CD14-positive monocyte (primary cell): ENCODE measurements at regions of chr20 and their contacts with region 1.

Region 1: DNA sequence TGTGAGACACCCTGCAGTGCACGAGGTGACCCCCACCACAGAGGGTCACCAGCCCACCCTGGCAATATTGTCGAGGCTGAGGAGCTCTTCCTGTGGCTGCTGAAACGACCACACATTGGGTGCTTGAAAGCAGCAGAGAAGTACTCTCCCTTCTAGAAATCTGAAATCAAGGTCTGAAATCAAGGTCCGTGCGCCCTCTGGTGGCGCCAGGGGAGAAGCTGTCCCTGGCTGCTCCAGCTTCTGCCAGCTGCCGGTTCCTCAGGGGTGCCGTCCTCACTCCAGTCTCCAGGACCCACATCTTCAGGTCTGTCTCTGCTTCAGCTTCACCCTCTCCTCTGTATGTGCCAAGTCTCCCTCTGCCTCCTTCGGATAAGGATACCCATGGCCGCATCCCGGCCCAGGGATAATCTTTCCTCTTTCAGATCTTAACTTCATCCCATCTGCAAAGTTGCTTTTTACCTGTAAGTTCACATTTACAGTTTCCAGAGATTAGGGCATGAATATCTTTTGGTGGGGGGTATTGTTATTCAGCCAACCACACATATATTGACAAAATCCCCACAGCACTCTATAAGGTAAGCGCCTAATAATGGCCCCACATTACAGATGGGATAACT is 108.3 kb upstream of the PHACTR3 start:
- DNase-seq: peak; percentile 9 to 36 (median 29)
- H3K4me3 ChIP-seq: no peak overlapping the region
- H3K4me3 Mint-ChIP-seq: no peak overlapping the region
- H3K27ac ChIP-seq: no peak overlapping the region
- H3K27ac Mint-ChIP-seq: no peak overlapping the region
- H3K4me1 ChIP-seq: no peaks in the 10 kb centered on the region
- H3K4me1 Mint-ChIP-seq: no peaks in the 10 kb centered on the region
- H3K27me3 ChIP-seq: peaks cover 0 to 2% of the 10 kb centered on the region in 2 donors
- H3K27me3 Mint-ChIP-seq: peaks cover 0 to 18% (median 11%) of the 10 kb centered on the region in 3 donors
- CTCF ChIP-seq: peak; percentile 94

Region 2: DNA sequence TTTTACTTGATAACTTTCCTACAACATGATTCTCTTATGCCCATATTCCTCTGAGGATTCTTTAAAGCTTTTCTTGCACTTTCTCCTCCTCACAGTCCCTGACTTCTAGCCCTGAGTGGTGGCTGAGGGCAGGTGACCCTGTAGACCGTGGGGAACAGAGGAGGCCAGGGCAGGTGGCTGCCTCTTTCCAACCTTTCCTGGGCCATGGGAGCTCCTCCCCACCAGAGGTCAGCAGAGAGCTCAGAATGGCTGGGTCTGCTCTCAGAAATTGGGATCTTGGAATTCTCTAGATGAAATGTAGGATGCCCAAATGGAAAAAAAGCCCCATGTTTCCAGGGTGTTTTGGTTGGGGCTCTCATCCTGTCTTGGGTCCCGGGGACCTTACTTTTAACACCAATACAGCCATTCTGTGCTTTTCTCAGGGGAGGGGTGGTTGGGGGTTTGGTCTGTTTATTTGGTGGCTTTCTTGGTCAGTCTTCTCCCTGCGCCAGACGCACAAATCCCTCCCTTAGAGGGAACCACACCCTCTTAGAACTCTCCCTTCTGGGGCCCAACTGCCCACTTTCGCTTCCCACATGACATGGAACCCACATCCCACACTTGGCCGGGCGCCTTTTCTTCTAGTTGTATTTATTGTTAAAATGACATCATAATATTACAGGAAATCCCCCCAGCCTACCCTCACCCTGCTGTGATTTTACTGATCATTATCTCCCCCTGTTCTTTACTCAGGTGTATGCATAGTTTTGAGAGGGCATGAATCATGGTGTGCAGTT is 625.6 kb before region 1 on chr20:
- intact Hi-C with region 1: loop called in 1 of 2 experiments (anchors 10 kb)
- DNase-seq: peak in 2 of 3 donors; percentile 36 to 44
- H3K4me3 ChIP-seq: no peak overlapping the region
- H3K4me3 Mint-ChIP-seq: peak overlapping the region in 1 of 2 donors; percentile 22
- H3K27ac ChIP-seq: no peak overlapping the region
- H3K27ac Mint-ChIP-seq: peak overlapping the region in 1 of 7 donors; percentile 23
- H3K4me1 ChIP-seq: peaks cover 6 to 10% of the 10 kb centered on the region in 2 donors
- H3K4me1 Mint-ChIP-seq: peaks cover 14% of the 10 kb centered on the region
- H3K27me3 ChIP-seq: peaks cover 10% of the 10 kb centered on the region in 2 donors
- H3K27me3 Mint-ChIP-seq: peaks cover 8 to 37% (median 24%) of the 10 kb centered on the region in 3 donors
- CTCF ChIP-seq: peak; percentile 77

Region 3: GRCh38 chr20:59276938-59277337 is 219.1 kb before region 1 on chr20:
- intact Hi-C with region 1: no loop called
- DNase-seq: no peak
- H3K4me3 ChIP-seq: no peak overlapping the region
- H3K4me3 Mint-ChIP-seq: no peak overlapping the region
- H3K27ac ChIP-seq: no peak overlapping the region
- H3K27ac Mint-ChIP-seq: no peak overlapping the region
- H3K4me1 ChIP-seq: no peaks in the 10 kb centered on the region
- H3K4me1 Mint-ChIP-seq: peaks cover 3% of the 10 kb centered on the region
- H3K27me3 ChIP-seq: peaks cover 0 to 2% of the 10 kb centered on the region in 2 donors
- H3K27me3 Mint-ChIP-seq: peaks cover 1 to 5% (median 5%) of the 10 kb centered on the region in 3 donors
- CTCF ChIP-seq: no peak